CD4-positive, alpha-beta memory T cell (primary cell): ENCODE measurements at regions of chr19 and their contacts with region 1.

Region 1: DNA sequence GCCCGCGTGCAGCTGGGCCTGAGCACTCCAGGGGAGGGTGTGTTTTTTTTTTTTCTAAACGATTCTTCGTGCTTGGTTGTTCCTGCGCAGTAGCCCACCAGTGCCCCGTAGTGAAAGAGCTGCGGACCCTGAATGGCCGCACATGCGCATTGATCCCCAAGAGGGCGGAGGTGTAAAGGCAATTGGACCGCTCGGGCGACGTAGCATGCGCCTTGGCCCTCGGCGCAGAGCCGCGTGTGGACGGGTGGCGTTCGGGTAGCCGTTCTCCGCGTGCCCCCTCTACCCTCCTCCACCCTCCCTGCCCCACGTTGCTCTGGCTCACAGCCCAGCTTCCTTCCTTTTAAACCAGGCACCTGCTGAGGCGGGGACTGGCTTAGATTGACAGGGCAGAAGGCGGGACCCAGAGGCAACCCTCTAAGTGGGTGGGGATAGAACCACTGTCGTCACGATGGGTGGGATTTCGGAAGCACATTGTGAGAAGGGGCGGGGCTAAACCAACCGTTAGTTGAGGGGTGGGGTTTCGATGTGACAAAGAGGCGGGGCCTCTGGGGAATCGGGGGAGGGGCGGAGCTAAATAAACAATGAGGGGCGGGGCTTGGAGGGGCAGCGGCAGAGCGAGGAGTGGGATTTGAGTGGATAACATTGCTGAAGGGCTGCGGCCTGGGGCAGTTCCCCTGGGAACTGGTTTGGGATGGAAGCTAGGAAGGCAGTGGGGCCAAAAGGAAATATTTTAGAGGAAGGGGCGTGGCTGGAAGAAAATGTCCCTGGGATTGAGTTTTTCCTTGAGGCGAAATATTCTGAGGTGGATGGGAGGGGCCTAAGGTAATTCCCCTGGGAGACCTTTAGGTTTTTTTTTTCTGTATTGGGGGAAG is 543 bp upstream of the NUP62 start:
- DNase-seq: peak; percentile 94 to 97 (median 96)
- H3K4me3 ChIP-seq: peak overlapping the region; percentile 93 to 99
- H3K4me3 Mint-ChIP-seq: peak overlapping the region; percentile 97 to 99 (median 98)
- H3K27ac ChIP-seq: peak overlapping the region; percentile 96
- H3K27ac Mint-ChIP-seq: peak overlapping the region; percentile 96 to 99 (median 98)
- H3K4me1 ChIP-seq: peaks cover 57% of the 10 kb centered on the region
- H3K4me1 Mint-ChIP-seq: peaks cover 36 to 74% (median 57%) of the 10 kb centered on the region in 4 donors
- H3K27me3 ChIP-seq: no peaks in the 10 kb centered on the region
- H3K27me3 Mint-ChIP-seq: no peaks in the 10 kb centered on the region

Region 2: GRCh38 chr19:49766007-49766937 is 163.6 kb before region 1 on chr19:
- CTCF ChIA-PET with region 1: no interaction called
- POLR2A ChIA-PET with region 1: interaction called, 5 read pairs
- intact Hi-C with region 1: loop called (anchors 5 kb)
- DNase-seq: peak; percentile 98 to 100 (median 100)
- H3K4me3 ChIP-seq: peak overlapping the region; percentile 75 to 88
- H3K4me3 Mint-ChIP-seq: peak overlapping the region; percentile 89 to 99 (median 94)
- H3K27ac ChIP-seq: peak overlapping the region; percentile 77
- H3K27ac Mint-ChIP-seq: peak overlapping the region; percentile 85 to 97 (median 96)
- H3K4me1 ChIP-seq: peaks cover 36% of the 10 kb centered on the region
- H3K4me1 Mint-ChIP-seq: peaks cover 30 to 48% (median 34%) of the 10 kb centered on the region in 4 donors
- H3K27me3 ChIP-seq: no peaks in the 10 kb centered on the region
- H3K27me3 Mint-ChIP-seq: no peaks in the 10 kb centered on the region

Region 3: GRCh38 chr19:49850473-49851342 is 79.1 kb before region 1 on chr19 and contains the start of gene PTOV1:
- CTCF ChIA-PET with region 1: no interaction called
- POLR2A ChIA-PET with region 1: interaction called, 10 read pairs
- intact Hi-C with region 1: loop called (anchors 2 kb)
- DNase-seq: peak; percentile 84 to 90 (median 87)
- H3K4me3 ChIP-seq: peak within 1 kb of the TSS; percentile 54 to 88
- H3K4me3 Mint-ChIP-seq: peak within 1 kb of the TSS; percentile 90 to 97 (median 93)
- H3K27ac ChIP-seq: peak within 1 kb of the TSS; percentile 98
- H3K27ac Mint-ChIP-seq: peak within 1 kb of the TSS; percentile 92 to 98 (median 97)
- H3K4me1 ChIP-seq: peaks cover 42% of the 10 kb centered on the region
- H3K4me1 Mint-ChIP-seq: peaks cover 29 to 49% (median 39%) of the 10 kb centered on the region in 4 donors
- H3K27me3 ChIP-seq: no peaks in the 10 kb centered on the region
- H3K27me3 Mint-ChIP-seq: no peaks in the 10 kb centered on the region
- total RNA-seq, gene PTOV1: 150 to 156 TPM

Region 4: DNA sequence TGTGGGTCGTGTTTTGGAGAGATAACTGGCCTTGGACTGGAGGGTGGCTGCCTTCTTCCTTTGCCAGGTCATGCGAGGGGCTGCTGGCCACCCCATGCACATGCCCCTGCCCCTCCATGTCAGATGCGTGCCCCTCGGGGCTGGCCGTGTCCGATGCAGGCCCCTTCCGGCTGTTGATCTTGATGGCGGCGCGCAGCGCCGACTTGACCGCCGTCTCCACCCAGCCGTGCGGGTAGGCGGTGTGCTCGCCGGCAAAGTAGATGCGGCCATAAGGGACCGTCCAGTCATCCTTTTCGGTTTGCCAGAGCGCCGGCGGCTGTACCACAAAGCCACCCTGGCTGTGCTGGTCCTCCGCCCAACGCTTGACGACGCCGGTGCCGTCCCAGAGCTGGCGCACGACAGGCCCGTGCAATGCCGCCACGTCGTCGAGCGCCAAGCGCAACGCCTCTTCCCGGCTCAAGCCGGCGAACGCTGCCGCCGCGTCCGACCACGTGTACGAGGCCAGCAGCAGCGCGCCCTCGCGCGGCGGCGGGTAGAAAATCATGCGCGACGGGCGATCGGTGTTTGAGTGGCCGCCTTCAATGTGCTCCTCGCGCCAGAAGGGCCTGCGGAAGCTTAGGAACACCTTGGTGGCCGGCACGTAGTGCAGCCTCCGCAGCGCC is 40.0 kb before region 1 on chr19:
- CTCF ChIA-PET with region 1: interaction called, 3 read pairs
- POLR2A ChIA-PET with region 1: interaction called, 19 read pairs
- intact Hi-C with region 1: no loop called
- DNase-seq: peak; percentile 77 to 79 (median 77)
- H3K4me3 ChIP-seq: peak overlapping the region in 1 of 2 donors; percentile 63
- H3K4me3 Mint-ChIP-seq: peak overlapping the region; percentile 77 to 85 (median 80)
- H3K27ac ChIP-seq: peak overlapping the region; percentile 39
- H3K27ac Mint-ChIP-seq: peak overlapping the region; percentile 81 to 95 (median 90)
- H3K4me1 ChIP-seq: peaks cover 10% of the 10 kb centered on the region
- H3K4me1 Mint-ChIP-seq: peaks cover 4 to 34% (median 23%) of the 10 kb centered on the region in 4 donors
- H3K27me3 ChIP-seq: no peaks in the 10 kb centered on the region
- H3K27me3 Mint-ChIP-seq: no peaks in the 10 kb centered on the region

Region 5: DNA sequence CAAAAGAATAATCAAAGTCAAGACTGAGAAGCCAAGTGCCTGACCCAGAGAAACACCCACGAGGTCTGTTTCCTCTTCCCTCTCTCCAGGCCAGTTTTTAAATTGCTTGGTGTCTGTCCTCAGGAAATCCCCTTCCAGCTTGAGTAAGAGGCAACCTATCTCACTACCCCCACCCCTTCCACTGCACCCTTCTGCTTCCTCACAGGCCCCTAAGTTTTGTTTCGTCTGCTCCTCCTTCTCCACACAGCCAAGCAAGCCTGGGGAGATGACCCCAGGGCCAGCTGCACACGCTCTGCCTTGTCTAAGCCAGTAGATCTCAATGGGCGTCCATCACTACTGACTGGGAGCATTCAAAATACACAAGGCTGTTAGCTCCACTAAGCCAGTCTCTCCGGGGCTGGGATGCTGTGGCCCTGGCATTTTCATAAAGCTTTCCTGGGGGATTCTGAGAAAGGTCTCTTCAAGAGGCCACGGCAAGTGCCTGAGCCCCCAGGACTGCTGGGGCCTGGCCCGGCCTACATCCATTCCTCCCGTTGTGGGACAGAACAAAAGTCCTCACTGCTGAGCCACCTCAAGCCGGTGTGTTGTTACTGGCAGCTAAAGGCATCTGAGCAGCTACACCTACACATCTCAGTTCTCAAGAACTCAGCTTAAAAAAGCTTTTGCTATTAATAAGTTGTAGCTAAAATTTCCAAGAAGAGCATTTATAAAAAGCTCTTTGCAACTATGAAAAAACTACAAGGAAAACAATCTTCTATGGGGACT is 18.3 kb before region 1 on chr19:
- CTCF ChIA-PET with region 1: no interaction called
- POLR2A ChIA-PET with region 1: interaction called, 14 read pairs
- intact Hi-C with region 1: no loop called
- DNase-seq: no peak
- H3K4me3 ChIP-seq: no peak overlapping the region
- H3K4me3 Mint-ChIP-seq: peak overlapping the region in 4 of 8 donors; percentile 6 to 71 (median 48)
- H3K27ac ChIP-seq: peak overlapping the region; percentile 22
- H3K27ac Mint-ChIP-seq: peak overlapping the region; percentile 65 to 92 (median 85)
- H3K4me1 ChIP-seq: peaks cover 20% of the 10 kb centered on the region
- H3K4me1 Mint-ChIP-seq: peaks cover 16 to 57% (median 33%) of the 10 kb centered on the region in 4 donors
- H3K27me3 ChIP-seq: no peaks in the 10 kb centered on the region
- H3K27me3 Mint-ChIP-seq: no peaks in the 10 kb centered on the region

Region 6: DNA sequence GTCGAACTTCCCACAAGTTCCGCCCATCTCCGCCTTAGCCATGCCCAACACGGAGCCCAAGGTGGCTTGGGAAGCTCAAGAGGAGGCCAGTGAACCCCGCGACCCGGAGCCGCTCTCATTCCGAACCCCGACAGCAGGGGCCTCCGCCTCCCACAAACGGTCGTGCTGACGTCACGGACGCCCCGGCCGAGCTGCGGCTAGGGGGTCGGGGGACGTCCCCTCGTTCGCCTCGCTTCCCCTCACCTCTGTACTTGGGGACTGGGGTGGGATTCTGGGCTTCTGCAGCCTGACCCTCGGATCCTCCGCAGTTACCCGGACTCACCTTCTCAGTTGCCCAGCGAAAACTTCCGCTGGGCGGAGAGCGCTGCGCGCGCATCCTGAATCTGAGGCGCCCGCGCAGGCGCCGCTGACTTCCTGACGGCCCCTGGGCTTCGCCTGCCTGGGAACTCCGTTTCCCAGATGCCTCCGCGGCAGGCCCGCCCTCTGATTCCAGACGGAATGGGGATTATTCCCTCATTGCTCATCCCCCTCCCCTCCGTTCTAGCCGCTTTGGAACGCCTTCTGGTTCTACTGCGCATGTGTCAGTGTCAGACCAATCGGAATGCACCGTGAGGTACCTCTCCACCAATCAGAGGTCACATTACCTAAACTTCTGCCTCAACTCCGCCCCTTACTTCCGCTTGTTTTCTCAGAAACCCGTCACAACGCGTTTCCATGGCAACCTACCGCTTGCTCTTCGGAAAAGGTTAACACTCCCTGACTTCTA is 95.4 kb after region 1 on chr19 and contains the start of gene VRK3:
- CTCF ChIA-PET with region 1: no interaction called
- POLR2A ChIA-PET with region 1: interaction called, 18 read pairs
- intact Hi-C with region 1: loop called (anchors 1 kb)
- DNase-seq: peak; percentile 98 to 100 (median 100)
- H3K4me3 ChIP-seq: peak within 1 kb of the TSS; percentile 53 to 98
- H3K4me3 Mint-ChIP-seq: peak within 1 kb of the TSS; percentile 96 to 99 (median 97)
- H3K27ac ChIP-seq: peak within 1 kb of the TSS; percentile 96
- H3K27ac Mint-ChIP-seq: peak within 1 kb of the TSS; percentile 98 to 100 (median 100)
- H3K4me1 ChIP-seq: peaks cover 33% of the 10 kb centered on the region
- H3K4me1 Mint-ChIP-seq: peaks cover 23 to 63% (median 41%) of the 10 kb centered on the region in 4 donors
- H3K27me3 ChIP-seq: no peaks in the 10 kb centered on the region
- H3K27me3 Mint-ChIP-seq: no peaks in the 10 kb centered on the region
- total RNA-seq, gene VRK3: 109 to 114 TPM